Astrocyte of the cerebellum (primary cell): ENCODE measurements at regions of chr2 and their contacts with region 1.

Region 1: DNA sequence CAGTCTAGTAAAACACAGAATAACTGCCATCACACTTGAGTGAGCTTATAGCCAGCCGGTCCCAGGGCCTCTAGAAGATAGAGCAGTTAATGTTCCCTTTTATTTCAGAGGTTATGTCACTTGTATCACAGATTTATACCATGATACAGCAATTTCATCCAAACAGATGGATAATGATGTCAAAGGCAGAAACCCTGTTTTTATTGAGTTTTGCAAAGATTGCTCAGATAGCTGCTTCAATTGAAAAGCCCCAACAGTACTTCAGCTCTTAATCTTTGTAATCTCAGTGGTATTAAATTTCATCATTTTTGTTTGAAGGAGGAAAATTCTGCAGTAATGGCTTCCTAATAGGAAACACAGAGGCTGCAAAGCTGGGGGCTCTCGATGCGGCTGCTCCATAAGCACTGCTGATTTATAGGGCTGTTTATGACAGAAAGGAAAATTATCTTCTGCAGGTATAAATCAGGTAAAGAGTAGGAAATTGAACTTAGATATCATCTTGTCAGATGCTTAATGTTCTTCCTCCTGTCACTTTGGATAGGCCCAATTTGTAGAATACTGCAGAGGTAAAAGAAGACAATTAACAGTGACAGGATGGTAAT is 112.3 kb downstream of the LNPK start:
- DNase-seq: no peak
- H3K4me3 ChIP-seq: no peak overlapping the region
- CTCF ChIP-seq: no peak

Region 2: DNA sequence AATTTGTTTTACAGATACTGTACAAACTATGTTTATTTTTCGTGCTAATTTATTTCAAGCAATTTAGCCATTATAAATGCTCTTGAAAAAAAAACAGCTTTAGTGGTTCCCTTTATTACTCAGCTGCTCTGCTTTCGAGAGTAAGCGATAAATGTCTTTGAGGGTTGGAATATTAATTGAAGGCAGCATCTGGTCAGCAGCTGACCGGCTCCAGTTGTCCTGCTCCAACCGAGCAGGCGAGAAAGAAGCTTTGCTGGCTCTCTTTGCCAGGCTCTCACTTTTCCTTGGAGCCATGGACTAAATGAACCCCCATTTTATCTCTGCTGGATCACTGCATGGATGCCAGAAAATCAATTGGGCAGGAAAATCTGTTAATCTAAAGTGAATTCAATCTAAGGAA is 35.1 kb before region 1 on chr2:
- in situ Hi-C with region 1: loop called (anchors 5 kb)
- DNase-seq: no peak
- H3K4me3 ChIP-seq: no peak overlapping the region
- CTCF ChIP-seq: no peak

Region 3: GRCh38 chr2:175965773-175966172 is 76.0 kb after region 1 on chr2:
- in situ Hi-C with region 1: loop called (anchors 5 kb)
- DNase-seq: no peak
- H3K4me3 ChIP-seq: no peak overlapping the region
- CTCF ChIP-seq: no peak